CD4-positive, alpha-beta T cell (primary cell): ENCODE measurements at regions of chr3 and their contacts with region 1.

Region 1: GRCh38 chr3:52245322-52246263 is at the start of gene PPM1M:
- DNase-seq: peak in 13 of 14 experiments; percentile 28 to 90 (median 65)
- ATAC-seq: peak; percentile 64
- H3K4me3 ChIP-seq: peak within 1 kb of the TSS; percentile 91
- H3K4me3 Mint-ChIP-seq: peak within 1 kb of the TSS; percentile 88
- H3K27ac ChIP-seq: peak within 1 kb of the TSS; percentile 90 to 95
- H3K27ac Mint-ChIP-seq: peak within 1 kb of the TSS; percentile 95
- H3K4me1 ChIP-seq: peaks cover 82% of the 10 kb centered on the region
- H3K4me1 Mint-ChIP-seq: peaks cover 87% of the 10 kb centered on the region
- H3K27me3 ChIP-seq: no peaks in the 10 kb centered on the region
- H3K27me3 Mint-ChIP-seq: no peaks in the 10 kb centered on the region
- CTCF ChIP-seq: no peak
- total RNA-seq, gene PPM1M: 36.7 to 40.2 TPM

Region 2: GRCh38 chr3:51568996-51569395 is 676.6 kb before region 1 on chr3:
- CTCF ChIA-PET with region 1: no interaction called
- POLR2A ChIA-PET with region 1: no interaction called
- intact Hi-C with region 1: no loop called
- DNase-seq: no peak
- ATAC-seq: no peak
- H3K4me3 ChIP-seq: no peak overlapping the region
- H3K4me3 Mint-ChIP-seq: no peak overlapping the region
- H3K27ac ChIP-seq: no peak overlapping the region
- H3K27ac Mint-ChIP-seq: no peak overlapping the region
- H3K4me1 ChIP-seq: no peaks in the 10 kb centered on the region
- H3K4me1 Mint-ChIP-seq: peaks cover 22% of the 10 kb centered on the region
- H3K27me3 ChIP-seq: no peaks in the 10 kb centered on the region
- H3K27me3 Mint-ChIP-seq: no peaks in the 10 kb centered on the region
- CTCF ChIP-seq: no peak

Region 3: DNA sequence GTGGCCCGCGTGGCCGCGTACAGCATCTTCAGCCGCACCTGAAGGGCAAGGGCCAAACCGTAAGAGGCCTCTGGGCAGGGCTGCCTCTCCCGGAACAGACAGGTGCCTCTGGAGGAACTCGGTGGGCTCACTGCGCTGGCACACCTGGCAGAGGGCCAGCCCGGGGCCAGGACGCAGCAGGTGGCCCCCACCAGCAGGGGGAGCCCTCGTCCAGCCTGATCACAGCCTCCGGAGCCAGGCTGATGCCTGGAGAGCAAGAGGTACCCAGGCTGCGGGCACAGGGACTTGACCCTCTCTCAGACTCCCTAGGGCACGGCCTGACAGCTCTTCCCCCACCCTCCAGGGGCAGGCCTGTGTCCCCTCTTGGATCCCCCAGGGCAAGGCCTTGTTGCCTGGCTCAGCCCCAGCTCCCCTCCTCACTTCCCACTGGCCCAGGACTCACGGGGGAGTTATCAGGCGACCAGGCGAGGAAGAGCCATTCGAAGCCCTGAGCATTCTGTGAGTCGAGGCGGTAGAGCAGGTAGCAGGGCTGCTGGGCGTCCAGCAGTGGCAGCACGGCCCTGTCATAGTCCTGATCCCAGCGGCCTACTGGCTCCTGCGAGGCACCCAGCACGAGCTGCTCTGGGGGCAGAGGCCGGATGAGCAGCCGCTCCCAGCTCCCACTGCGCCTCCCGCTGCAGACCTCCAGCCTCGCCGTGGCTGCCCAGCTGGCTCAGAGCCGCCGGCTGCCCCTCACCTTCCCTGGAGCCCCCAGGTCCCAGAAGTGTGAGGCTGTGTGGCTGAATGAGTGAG is 13.9 kb before region 1 on chr3:
- CTCF ChIA-PET with region 1: interaction called, 15 read pairs
- POLR2A ChIA-PET with region 1: interaction called, 293 read pairs
- intact Hi-C with region 1: no loop called
- DNase-seq: peak; percentile 70 to 94 (median 88)
- ATAC-seq: peak; percentile 75
- H3K4me3 ChIP-seq: no peak overlapping the region
- H3K4me3 Mint-ChIP-seq: peak overlapping the region; percentile 30
- H3K27ac ChIP-seq: peak overlapping the region in 1 of 2 donors; percentile 43
- H3K27ac Mint-ChIP-seq: peak overlapping the region; percentile 72
- H3K4me1 ChIP-seq: peaks cover 73% of the 10 kb centered on the region
- H3K4me1 Mint-ChIP-seq: peaks cover 56% of the 10 kb centered on the region
- H3K27me3 ChIP-seq: no peaks in the 10 kb centered on the region
- H3K27me3 Mint-ChIP-seq: no peaks in the 10 kb centered on the region
- CTCF ChIP-seq: peak; percentile 67

Region 4: GRCh38 chr3:52259035-52259434 is 13.4 kb after region 1 on chr3:
- CTCF ChIA-PET with region 1: interaction called, 12 read pairs
- POLR2A ChIA-PET with region 1: interaction called, 293 read pairs
- intact Hi-C with region 1: no loop called
- DNase-seq: no peak
- ATAC-seq: no peak
- H3K4me3 ChIP-seq: no peak overlapping the region
- H3K4me3 Mint-ChIP-seq: no peak overlapping the region
- H3K27ac ChIP-seq: peak overlapping the region in 1 of 2 donors; percentile 49
- H3K27ac Mint-ChIP-seq: peak overlapping the region; percentile 95
- H3K4me1 ChIP-seq: peaks cover 78% of the 10 kb centered on the region
- H3K4me1 Mint-ChIP-seq: peaks cover 98% of the 10 kb centered on the region
- H3K27me3 ChIP-seq: no peaks in the 10 kb centered on the region
- H3K27me3 Mint-ChIP-seq: no peaks in the 10 kb centered on the region
- CTCF ChIP-seq: no peak